ENCODE measurements at regions of chr14 and their contacts with region 1.

Region 1: DNA sequence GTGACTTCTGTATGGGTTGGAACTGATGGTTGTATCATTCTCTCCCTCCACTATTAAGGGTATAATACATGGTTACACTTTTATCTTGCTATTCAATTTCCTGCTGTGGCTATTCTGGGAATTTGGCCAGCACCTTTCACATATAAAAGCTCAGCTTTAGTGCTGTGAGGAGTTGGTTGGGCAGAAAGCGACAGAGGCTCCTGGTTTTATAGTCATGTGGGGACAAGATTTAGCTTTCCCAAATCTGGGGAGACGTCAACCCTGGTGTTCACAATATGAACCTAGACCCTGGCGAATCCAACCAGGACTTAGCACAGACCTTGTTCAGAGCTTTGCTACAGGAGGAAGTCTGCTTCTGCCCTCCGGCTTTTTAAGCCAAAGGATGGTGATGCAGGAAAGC is 36.5 kb downstream of the FOS start:
- DNase-seq: peak; percentile 53 to 70
- H3K4me3 ChIP-seq: no peak overlapping the region; the same call in 1 of the 2 replicates
- H3K27ac ChIP-seq: peak overlapping the region; percentile 3; the same call in 1 of the 2 replicates
- H3K4me1 ChIP-seq: peaks cover 31% of the 10 kb centered on the region
- H3K27me3 ChIP-seq: no peaks in the 10 kb centered on the region
- CTCF ChIP-seq: no peak

Region 2: GRCh38 chr14:75369506-75369905 is 54.4 kb after region 1 on chr14:
- CTCF ChIA-PET with region 1: no interaction called
- POLR2A ChIA-PET with region 1: no interaction called
- intact Hi-C with region 1: loop called (anchors 5 kb)
- DNase-seq: no peak
- H3K4me3 ChIP-seq: no peak overlapping the region
- H3K27ac ChIP-seq: no peak overlapping the region
- H3K4me1 ChIP-seq: no peaks in the 10 kb centered on the region
- H3K27me3 ChIP-seq: peaks cover 23% of the 10 kb centered on the region
- CTCF ChIP-seq: no peak

Region 3: DNA sequence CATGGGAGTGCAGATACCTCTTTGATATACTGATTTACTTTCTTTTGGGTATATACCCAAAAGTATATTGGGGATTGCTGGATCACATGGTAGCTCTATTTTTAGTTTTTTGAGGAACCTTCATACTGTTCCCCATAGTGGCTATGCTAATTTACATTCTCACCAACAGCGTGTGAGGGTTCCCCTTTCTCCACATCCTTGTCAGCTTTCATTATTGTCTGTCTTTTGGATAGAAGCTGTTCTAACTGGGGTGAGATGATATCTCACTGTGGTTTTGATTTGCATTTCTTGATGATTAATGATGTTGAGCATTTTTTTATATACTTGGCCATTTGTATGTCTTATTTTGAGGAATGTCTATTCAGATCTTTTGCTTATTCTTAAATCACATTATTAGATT is 68.6 kb after region 1 on chr14:
- CTCF ChIA-PET with region 1: no interaction called
- POLR2A ChIA-PET with region 1: interaction called, 8 read pairs
- intact Hi-C with region 1: loop called (anchors 5 kb)
- DNase-seq: no peak
- H3K4me3 ChIP-seq: no peak overlapping the region
- H3K27ac ChIP-seq: no peak overlapping the region
- H3K4me1 ChIP-seq: no peaks in the 10 kb centered on the region
- H3K27me3 ChIP-seq: no peaks in the 10 kb centered on the region
- CTCF ChIP-seq: no peak

Region 4: DNA sequence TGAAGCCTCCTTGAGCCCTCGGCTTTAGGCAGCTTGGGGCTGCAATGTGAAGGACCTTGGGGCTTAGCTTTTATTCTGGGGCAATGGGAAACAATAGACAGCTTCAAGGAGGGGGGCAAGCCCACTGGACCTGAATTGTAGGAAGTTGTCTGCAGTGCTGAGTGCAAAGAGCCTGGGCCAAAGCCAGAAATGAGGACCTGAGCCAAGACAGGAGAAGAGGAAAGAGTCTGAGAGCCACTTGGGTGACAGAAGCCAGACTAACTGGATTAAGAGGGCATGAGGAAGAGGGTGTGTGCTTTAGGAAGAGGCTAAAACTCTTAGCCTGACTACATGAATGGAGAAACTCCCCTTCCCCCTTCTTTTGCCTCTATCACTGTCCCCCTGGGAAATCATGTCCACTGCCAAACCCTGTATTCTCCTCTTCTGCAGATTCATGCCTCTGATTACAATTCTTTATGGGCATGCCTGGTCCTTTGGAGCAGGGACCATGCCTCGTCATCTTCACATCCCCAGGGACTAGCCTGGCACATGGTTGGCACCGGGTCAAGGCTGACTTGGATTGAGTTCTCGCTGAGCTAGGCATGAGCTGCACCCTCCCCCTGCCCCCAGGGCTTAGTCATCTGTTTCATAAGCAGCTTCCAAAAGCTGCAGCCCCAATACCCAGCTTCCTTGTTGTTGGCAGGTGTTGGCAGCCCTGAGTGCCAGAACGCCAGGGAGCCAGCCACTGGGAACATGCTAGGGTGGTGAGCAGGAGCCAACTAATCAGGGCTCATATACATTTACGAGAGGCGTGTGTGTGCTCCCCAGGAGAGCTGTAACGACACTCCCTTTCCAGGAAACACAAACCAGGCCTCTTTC is 84.9 kb after region 1 on chr14:
- CTCF ChIA-PET with region 1: interaction called, 11 read pairs
- POLR2A ChIA-PET with region 1: no interaction called
- intact Hi-C with region 1: loop called (anchors 1 kb)
- DNase-seq: peak; percentile 100
- H3K4me3 ChIP-seq: peak overlapping the region; percentile 17; the same call in 1 of the 2 replicates
- H3K27ac ChIP-seq: peak overlapping the region; percentile 70
- H3K4me1 ChIP-seq: peaks cover 31% of the 10 kb centered on the region
- H3K27me3 ChIP-seq: no peaks in the 10 kb centered on the region
- CTCF ChIP-seq: no peak

Measured in PC-9 (cell line).